AG04449 (cell line): ENCODE measurements at regions of chr14 and their contacts with region 1.

Region 1: GRCh38 chr14:31084385-31084784 is 58.2 kb upstream of the STRN3 start:
- DNase-seq: no peak
- H3K4me3 ChIP-seq: no peak overlapping the region
- CTCF ChIP-seq: no peak

Region 2: DNA sequence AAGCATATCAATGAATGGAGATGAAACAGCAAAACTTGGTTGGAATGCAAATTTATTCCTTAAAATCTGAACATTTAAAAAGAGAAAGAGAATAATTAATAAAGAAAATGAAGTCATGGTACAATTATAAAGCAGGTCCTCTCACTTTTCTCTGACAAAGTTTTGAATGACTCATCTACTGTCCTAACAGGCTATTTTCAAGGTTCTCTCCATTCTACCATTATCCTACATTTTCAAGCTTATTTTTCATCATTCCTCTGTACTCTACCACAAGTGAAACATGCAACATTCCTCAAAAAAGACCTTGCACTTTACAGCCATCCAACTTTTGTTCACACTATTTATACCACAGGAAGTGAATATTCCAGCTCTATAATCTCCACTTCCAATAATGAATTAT is 95.9 kb before region 1 on chr14:
- CTCF ChIA-PET with region 1: interaction called, 15 read pairs
- POLR2A ChIA-PET with region 1: no interaction called
- DNase-seq: peak; percentile 9
- H3K4me3 ChIP-seq: no peak overlapping the region
- CTCF ChIP-seq: no peak

Region 3: DNA sequence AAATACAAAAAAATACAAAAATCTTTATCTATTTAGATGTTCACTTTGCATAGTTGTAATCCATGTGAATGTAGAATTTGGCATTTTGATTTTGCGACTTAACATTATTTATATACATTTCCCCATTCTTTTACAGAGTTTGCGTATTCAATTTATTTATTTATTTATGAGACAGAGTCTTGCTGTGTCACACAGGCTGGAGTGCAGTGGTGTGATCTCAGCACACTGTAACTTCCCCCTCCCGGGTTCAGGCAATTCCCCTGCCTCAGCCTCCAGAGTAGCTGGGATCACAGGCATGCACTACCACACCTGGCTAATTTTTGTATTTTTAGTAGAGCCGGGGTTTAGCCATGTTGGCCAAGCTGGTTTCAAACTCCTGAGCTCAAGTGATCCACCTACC is 32.9 kb before region 1 on chr14:
- CTCF ChIA-PET with region 1: interaction called, 10 read pairs
- POLR2A ChIA-PET with region 1: no interaction called
- DNase-seq: no peak
- H3K4me3 ChIP-seq: no peak overlapping the region
- CTCF ChIP-seq: no peak

Region 4: DNA sequence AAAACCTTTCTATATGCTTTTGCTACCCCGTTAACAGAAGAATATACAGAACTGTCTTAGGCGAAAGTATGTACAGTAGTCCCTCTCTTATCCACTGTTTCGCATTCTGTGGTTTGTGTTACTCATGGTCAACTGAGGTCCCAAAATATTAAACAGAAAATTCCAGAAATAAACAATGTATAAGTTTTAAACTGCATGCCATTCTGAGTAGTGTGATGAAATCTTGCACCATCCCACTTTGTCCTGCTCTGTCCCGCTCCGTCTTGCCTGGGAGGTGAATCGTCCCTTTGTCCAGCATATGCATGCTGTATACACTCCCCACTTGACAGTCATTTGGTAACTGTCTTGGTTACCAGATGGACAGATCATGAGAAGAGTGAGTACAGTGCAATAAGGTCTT is 11.9 kb after region 1 on chr14:
- CTCF ChIA-PET with region 1: interaction called, 11 read pairs
- POLR2A ChIA-PET with region 1: no interaction called
- DNase-seq: peak; percentile 23
- H3K4me3 ChIP-seq: no peak overlapping the region
- CTCF ChIP-seq: no peak

Region 5: DNA sequence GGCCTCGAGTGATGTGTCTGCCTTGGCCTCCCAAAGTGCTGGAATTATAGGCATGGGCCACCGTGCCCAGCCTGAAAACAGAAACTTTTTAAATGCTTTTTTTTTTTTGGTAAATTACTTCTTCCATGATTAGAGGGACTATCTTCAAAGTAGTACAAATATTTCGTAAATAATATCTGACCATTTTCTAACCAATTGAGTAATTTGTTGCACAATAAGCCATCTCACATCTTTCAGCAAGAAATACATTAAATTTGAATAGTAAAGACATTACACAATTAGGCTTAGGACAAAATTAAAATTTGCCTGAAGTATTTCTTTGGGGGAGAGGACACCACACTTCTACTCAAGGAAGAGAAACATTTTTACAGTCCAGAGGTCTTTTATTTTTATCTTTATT is 26.5 kb after region 1 on chr14:
- CTCF ChIA-PET with region 1: no interaction called
- POLR2A ChIA-PET with region 1: no interaction called
- DNase-seq: no peak
- H3K4me3 ChIP-seq: no peak overlapping the region
- CTCF ChIP-seq: no peak

Region 6: DNA sequence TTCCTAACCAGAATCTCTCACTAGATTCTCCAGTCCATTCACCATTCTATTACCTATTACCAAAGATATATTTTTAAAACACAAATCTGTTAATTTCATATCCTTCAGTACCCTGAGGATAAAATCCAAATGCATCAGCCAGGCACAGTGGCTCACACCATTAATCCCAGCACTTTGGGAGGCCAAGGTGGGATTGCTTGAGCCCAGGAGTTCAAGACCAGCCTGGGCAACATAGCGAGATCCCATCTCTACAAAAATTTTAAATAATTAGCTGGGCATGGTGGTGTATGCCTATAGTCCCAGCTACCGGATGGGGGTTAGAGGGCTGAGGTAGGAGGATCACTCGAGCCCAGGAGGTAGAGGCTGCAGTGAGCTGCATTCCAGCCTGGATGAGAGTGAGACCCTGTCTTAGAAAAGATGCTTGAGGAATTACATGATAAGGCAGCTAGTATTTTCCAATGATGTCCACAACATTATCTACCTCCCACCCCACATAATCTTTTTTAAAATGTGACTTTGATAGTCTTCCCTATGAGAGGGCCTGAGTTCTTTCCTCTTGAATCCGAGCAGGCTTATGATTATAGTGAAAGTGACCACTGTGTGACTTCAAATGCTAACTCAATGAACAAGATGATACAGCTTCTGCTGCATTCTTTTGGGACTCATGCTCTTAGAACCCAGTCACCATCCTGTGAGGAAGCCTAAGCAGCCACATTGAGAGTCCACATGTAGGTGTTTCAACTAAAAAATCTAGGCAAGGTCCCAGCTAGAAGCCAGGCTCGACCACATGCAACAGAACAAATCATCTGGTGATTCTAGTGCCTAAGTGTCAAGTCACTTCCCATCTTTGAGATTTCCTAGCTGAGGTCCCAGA is 105.2 kb after region 1 on chr14:
- CTCF ChIA-PET with region 1: no interaction called
- POLR2A ChIA-PET with region 1: no interaction called
- DNase-seq: no peak
- H3K4me3 ChIP-seq: no peak overlapping the region
- CTCF ChIP-seq: no peak